ENCODE measurements at regions of chr22 and their contacts with region 1.

Region 1: DNA sequence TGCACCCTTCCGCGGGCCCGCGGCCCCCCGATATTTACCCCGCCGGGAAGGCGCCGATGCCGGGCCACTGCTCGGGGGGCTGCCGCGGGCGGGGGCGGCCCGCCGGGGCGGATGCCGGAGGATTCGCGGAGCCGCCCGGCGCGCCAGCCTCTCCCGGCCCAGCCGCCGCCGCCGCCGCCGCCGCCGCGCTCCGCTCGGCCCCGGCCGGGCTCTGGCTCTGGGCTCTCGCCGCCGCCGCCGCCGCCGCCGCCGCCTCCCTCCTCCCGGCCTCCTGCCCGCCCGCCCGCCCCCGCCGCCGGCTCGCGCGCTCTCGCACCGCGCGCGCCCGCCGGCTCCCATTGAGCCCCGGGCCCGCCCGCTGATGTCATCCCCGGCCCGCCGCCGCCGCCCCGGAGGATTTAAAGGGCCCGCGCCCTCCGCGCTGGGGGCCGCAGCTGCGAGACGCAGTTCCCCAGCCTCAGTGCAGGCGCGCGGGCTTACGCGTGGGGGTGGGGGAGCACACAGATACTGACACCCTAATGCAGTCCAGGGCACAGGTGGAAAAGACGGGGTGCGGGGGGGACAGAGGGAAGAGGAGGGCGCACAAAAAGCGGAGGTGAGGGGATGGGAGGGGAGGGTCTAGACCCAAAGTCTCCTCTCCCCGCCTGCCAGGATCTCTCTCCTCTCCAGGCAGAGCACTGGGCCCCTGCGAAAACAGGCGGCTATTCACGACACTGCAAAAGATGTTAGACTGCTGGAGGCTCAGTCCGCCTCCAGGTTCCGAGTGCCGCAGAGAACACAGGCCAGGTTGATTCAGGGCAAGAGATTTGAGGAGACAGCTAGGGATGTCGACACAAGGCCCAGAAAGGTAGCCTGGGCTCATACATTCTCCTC is at the start of gene CSNK1E:
- DNase-seq: peak; percentile 84
- ATAC-seq: peak; percentile 61
- H3K4me3 ChIP-seq: peak within 1 kb of the TSS; percentile 3 to 71 (median 58)
- H3K4me3 Mint-ChIP-seq: peak within 1 kb of the TSS; percentile 92
- H3K27ac ChIP-seq: peak within 1 kb of the TSS; percentile 82 to 91
- H3K27ac Mint-ChIP-seq: peak within 1 kb of the TSS; percentile 97
- H3K4me1 ChIP-seq: peaks cover 40 to 51% of the 10 kb centered on the region in 2 donors
- H3K4me1 Mint-ChIP-seq: peaks cover 49% of the 10 kb centered on the region
- H3K27me3 ChIP-seq: no peaks in the 10 kb centered on the region
- H3K27me3 Mint-ChIP-seq: no peaks in the 10 kb centered on the region
- CTCF ChIP-seq: no peak
- total RNA-seq, gene CSNK1E: 133 and 136 TPM in 2 replicates

Region 2: GRCh38 chr22:37887610-37888378 is 429.6 kb before region 1 on chr22:
- CTCF ChIA-PET with region 1: no interaction called
- POLR2A ChIA-PET with region 1: no interaction called
- intact Hi-C with region 1: no loop called
- DNase-seq: no peak
- ATAC-seq: no peak
- H3K4me3 ChIP-seq: no peak overlapping the region
- H3K4me3 Mint-ChIP-seq: no peak overlapping the region
- H3K27ac ChIP-seq: no peak overlapping the region
- H3K27ac Mint-ChIP-seq: no peak overlapping the region
- H3K4me1 ChIP-seq: no peaks in the 10 kb centered on the region
- H3K4me1 Mint-ChIP-seq: peaks cover 4% of the 10 kb centered on the region
- H3K27me3 ChIP-seq: no peaks in the 10 kb centered on the region
- H3K27me3 Mint-ChIP-seq: no peaks in the 10 kb centered on the region
- CTCF ChIP-seq: peak; percentile 11

Region 3: DNA sequence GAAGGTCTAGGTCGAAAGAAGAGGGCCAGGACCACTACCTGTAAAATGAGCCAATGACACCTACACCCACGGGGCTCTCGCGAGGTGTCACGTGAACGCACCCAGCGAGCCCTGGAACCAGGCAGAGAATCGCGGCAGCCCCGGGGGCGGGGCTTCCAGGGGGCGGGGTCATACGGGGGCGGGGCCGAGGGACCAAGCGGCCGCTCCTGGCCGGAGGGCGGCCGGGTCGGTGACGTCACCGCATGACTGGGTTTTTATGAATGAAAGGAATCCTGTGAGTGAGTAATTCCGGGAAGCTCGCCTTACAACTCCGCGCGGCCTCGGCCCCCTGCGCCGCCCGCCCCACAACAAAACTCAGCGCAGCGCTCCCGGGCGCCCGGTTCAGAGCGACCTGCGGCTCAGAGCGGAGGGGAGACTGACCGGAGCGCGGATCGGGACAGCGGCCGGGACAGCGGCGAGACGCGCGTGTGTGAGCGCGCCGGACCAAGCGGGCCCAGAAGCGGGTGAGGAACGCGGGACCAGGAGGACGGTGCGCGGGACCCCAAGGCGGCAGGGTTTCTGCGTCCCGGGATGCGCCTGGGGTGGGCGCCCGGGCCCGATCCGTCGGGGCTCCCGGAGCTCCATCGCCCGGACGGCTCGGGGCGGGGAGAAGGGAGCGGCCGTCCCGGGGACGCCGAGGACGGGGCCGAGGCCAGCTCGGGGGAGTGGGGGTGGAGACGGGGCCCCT is 115.5 kb before region 1 on chr22 and contains the start of gene MAFF:
- CTCF ChIA-PET with region 1: no interaction called
- POLR2A ChIA-PET with region 1: no interaction called
- intact Hi-C with region 1: loop called (anchors 5 kb)
- DNase-seq: peak; percentile 87
- ATAC-seq: peak; percentile 77
- H3K4me3 ChIP-seq: peak within 1 kb of the TSS; percentile 49 to 78 (median 67)
- H3K4me3 Mint-ChIP-seq: peak within 1 kb of the TSS; percentile 90
- H3K27ac ChIP-seq: peak within 1 kb of the TSS; percentile 38 to 66
- H3K27ac Mint-ChIP-seq: peak within 1 kb of the TSS; percentile 83
- H3K4me1 ChIP-seq: peaks cover 25 to 33% of the 10 kb centered on the region in 2 donors
- H3K4me1 Mint-ChIP-seq: peaks cover 44% of the 10 kb centered on the region
- H3K27me3 ChIP-seq: no peaks in the 10 kb centered on the region
- H3K27me3 Mint-ChIP-seq: no peaks in the 10 kb centered on the region
- CTCF ChIP-seq: no peak
- total RNA-seq, gene MAFF: 4.8 and 5.3 TPM in 2 replicates

Region 4: DNA sequence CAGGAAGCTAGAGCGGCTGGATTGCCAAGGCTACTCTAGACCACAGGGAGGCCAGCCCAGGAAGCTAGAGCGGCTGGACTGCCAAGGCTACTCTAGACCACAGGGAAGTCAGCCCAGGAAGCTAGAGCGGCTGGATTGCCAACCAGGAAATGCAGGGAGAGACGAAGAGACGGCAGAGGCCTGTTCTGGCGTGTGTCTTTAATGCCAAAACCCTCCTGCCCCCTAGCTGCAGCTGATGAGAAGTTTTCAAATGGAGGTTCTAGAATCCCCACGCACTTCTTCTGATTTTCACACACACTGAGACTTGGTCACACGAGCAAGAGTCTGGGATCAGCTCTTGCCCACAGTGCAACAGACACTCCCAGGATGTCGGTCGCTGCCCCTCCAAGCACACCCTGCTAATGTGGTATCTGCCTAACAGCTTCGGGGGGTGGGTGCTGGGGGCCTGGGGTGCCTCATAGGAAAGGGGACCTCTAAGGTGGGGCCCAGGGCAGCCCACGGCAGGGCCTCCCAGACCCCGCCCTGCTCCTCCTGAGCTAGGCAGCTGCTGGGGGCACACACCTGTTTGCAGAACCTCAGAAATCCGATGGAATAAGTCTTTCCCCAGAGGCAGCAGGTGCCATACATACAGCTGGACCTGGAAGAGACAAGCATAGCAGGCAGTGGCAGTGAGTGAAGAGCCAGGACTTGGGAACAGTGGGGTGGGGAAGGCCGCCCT is 87.1 kb before region 1 on chr22:
- CTCF ChIA-PET with region 1: no interaction called
- POLR2A ChIA-PET with region 1: no interaction called
- intact Hi-C with region 1: no loop called
- DNase-seq: peak; percentile 48
- ATAC-seq: no peak
- H3K4me3 ChIP-seq: no peak overlapping the region
- H3K4me3 Mint-ChIP-seq: no peak overlapping the region
- H3K27ac ChIP-seq: no peak overlapping the region
- H3K27ac Mint-ChIP-seq: no peak overlapping the region
- H3K4me1 ChIP-seq: no peaks in the 10 kb centered on the region
- H3K4me1 Mint-ChIP-seq: no peaks in the 10 kb centered on the region
- H3K27me3 ChIP-seq: no peaks in the 10 kb centered on the region
- H3K27me3 Mint-ChIP-seq: no peaks in the 10 kb centered on the region
- CTCF ChIP-seq: peak; percentile 35

Region 5: GRCh38 chr22:38305471-38306448 is 11.6 kb before region 1 on chr22:
- CTCF ChIA-PET with region 1: interaction called, 8 read pairs
- POLR2A ChIA-PET with region 1: interaction called, 5 read pairs
- intact Hi-C with region 1: loop called (anchors 1 kb)
- DNase-seq: peak; percentile 72
- ATAC-seq: peak; percentile 77
- H3K4me3 ChIP-seq: peak overlapping the region in 3 of 5 experiments; percentile 4 to 18 (median 5)
- H3K4me3 Mint-ChIP-seq: peak overlapping the region; percentile 70
- H3K27ac ChIP-seq: peak overlapping the region; percentile 38 to 48
- H3K27ac Mint-ChIP-seq: peak overlapping the region; percentile 80
- H3K4me1 ChIP-seq: peaks cover 11 to 22% of the 10 kb centered on the region in 2 donors
- H3K4me1 Mint-ChIP-seq: peaks cover 34% of the 10 kb centered on the region
- H3K27me3 ChIP-seq: no peaks in the 10 kb centered on the region
- H3K27me3 Mint-ChIP-seq: no peaks in the 10 kb centered on the region
- CTCF ChIP-seq: no peak

Region 6: GRCh38 chr22:38442967-38443627 is 125.7 kb after region 1 on chr22:
- CTCF ChIA-PET with region 1: no interaction called
- POLR2A ChIA-PET with region 1: no interaction called
- intact Hi-C with region 1: no loop called
- DNase-seq: no peak
- ATAC-seq: no peak
- H3K4me3 ChIP-seq: no peak overlapping the region
- H3K4me3 Mint-ChIP-seq: no peak overlapping the region
- H3K27ac ChIP-seq: no peak overlapping the region
- H3K27ac Mint-ChIP-seq: peak overlapping the region; percentile 10
- H3K4me1 ChIP-seq: no peaks in the 10 kb centered on the region
- H3K4me1 Mint-ChIP-seq: no peaks in the 10 kb centered on the region
- H3K27me3 ChIP-seq: peaks cover 0 to 3% (median 0%) of the 10 kb centered on the region in 4 experiments
- H3K27me3 Mint-ChIP-seq: peaks cover 31% of the 10 kb centered on the region
- CTCF ChIP-seq: no peak

Region 7: DNA sequence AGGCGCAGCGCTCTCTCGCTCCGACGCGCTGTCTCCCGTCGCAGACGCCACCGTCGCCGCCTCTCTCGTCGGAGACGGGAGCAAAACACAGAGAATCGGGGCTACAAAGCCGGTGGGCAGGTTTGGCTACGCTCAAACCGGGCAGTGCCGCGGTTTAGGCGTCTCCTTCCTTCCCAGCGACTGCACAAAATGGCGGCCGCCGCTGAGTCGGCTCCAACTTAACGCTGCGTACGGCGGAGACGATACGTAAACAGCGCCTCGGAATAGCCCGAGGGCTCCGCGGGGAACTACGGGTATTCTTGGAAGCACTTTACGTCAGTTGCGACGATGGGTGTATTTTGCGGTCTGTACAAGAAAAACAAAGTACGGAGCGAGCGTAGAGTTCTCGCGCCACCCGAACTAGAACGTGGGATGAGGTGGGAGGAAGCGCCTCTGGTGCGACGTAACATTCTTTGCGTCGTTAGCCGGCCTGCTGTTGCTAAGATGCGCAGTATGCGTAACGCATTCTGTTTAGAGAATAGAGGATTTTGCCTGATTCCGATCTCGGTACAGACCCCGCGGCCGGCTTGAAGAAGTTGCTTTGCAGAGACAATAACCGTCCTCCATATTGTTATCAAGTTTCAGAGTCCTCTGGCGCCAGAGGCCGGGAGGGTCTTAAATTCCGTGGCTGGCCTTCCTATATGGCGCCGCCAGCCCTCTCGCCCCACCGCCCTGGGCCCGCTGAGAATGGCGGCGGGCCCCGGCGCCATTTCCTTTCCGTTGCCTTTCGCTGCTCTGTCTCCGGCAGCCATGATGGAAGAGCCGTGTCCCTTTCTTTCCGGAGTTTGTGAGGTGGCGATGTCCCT is 189.0 kb after region 1 on chr22 and contains the start of gene DDX17:
- CTCF ChIA-PET with region 1: no interaction called
- POLR2A ChIA-PET with region 1: no interaction called
- intact Hi-C with region 1: loop called (anchors 5 kb)
- DNase-seq: peak; percentile 99
- ATAC-seq: peak; percentile 87
- H3K4me3 ChIP-seq: peak within 1 kb of the TSS; percentile 78 to 99 (median 93)
- H3K4me3 Mint-ChIP-seq: peak within 1 kb of the TSS; percentile 99
- H3K27ac ChIP-seq: peak within 1 kb of the TSS; percentile 98
- H3K27ac Mint-ChIP-seq: peak within 1 kb of the TSS; percentile 100
- H3K4me1 ChIP-seq: peaks cover 39 to 40% of the 10 kb centered on the region in 2 donors
- H3K4me1 Mint-ChIP-seq: peaks cover 51% of the 10 kb centered on the region
- H3K27me3 ChIP-seq: no peaks in the 10 kb centered on the region
- H3K27me3 Mint-ChIP-seq: no peaks in the 10 kb centered on the region
- CTCF ChIP-seq: no peak
- total RNA-seq, gene DDX17: 936 and 967 TPM in 2 replicates

Region 8: DNA sequence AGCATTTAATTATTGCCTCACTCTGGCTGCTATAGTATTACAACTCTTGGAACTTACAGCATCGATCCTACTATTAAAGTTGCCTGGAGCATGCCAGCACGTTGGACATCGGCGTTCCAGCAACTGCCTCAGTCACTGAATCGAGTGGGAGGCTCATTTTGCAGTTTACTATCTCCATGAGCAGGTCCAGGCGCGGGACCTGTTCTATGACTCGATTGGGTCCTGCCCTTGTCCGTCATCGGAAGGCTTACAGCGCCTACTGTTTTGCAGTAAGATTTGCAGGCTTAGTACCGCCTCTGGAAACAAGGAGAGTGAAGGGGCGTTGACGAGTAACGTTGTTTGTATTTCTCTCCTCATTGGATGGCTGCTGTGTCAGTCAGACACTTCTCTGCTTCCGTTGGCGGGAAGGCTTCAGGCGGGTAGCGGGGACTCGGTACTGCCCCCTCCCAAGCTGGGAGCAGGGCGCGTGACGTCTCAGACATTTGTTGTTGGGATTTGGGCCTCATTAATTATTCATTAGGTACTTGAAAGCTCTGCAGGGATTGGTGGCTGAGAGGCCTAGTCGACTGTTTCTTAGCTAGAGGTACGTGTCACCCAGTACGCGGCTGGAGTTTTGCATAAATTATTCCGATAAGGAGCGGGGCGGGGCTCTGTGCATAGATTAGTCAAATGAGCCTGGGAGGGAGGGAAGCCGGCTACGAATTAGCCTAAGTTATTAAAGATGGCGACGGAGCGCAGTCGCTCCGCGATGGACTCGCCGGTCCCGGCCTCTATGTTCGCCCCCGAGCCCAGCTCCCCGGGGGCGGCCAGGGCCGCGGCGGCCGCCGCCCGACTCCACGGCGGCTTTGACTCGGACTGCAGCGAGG is 388.1 kb after region 1 on chr22 and contains the start of gene GTPBP1:
- CTCF ChIA-PET with region 1: no interaction called
- POLR2A ChIA-PET with region 1: interaction called, 11 read pairs
- intact Hi-C with region 1: loop called (anchors 5 kb)
- DNase-seq: peak; percentile 100
- ATAC-seq: peak; percentile 75
- H3K4me3 ChIP-seq: peak within 1 kb of the TSS; percentile 64 to 93 (median 88)
- H3K4me3 Mint-ChIP-seq: peak within 1 kb of the TSS; percentile 94
- H3K27ac ChIP-seq: peak within 1 kb of the TSS; percentile 83 to 91
- H3K27ac Mint-ChIP-seq: peak within 1 kb of the TSS; percentile 98
- H3K4me1 ChIP-seq: peaks cover 51 to 54% of the 10 kb centered on the region in 2 donors
- H3K4me1 Mint-ChIP-seq: peaks cover 65% of the 10 kb centered on the region
- H3K27me3 ChIP-seq: no peaks in the 10 kb centered on the region
- H3K27me3 Mint-ChIP-seq: no peaks in the 10 kb centered on the region
- CTCF ChIP-seq: peak; percentile 26
- total RNA-seq, gene GTPBP1: 174 and 175 TPM in 2 replicates

Measured in B cell (primary cell).